Activated T-helper 1 cell treated with anti-CD3 and anti-CD28 coated beads, Interleukin-12 subunit alpha, Interleukin-12 subunit beta, Interleukin-2, Interleukin-4 antibody, amounts not matched to agents 30 ng/mL and 10 ng/mL and 1 ng/mL, durations not matched to agents 14 hours and 24 hours and 36 hours (primary cell): ENCODE measurements at regions of chr1 and their contacts with region 1.

Region 1: GRCh38 chr1:100249537-100250257 is at the start of gene DBT:
- DNase-seq: peak; percentile 92
- H3K4me3 Mint-ChIP-seq: no peak within 1 kb of the TSS
- H3K27ac Mint-ChIP-seq: no peak within 1 kb of the TSS
- H3K4me1 Mint-ChIP-seq: peaks cover 10% of the 10 kb centered on the region
- H3K27me3 Mint-ChIP-seq: peaks cover 12% of the 10 kb centered on the region
- total RNA-seq, gene DBT: 11.3 and 11.7 TPM in 2 replicates

Region 2: DNA sequence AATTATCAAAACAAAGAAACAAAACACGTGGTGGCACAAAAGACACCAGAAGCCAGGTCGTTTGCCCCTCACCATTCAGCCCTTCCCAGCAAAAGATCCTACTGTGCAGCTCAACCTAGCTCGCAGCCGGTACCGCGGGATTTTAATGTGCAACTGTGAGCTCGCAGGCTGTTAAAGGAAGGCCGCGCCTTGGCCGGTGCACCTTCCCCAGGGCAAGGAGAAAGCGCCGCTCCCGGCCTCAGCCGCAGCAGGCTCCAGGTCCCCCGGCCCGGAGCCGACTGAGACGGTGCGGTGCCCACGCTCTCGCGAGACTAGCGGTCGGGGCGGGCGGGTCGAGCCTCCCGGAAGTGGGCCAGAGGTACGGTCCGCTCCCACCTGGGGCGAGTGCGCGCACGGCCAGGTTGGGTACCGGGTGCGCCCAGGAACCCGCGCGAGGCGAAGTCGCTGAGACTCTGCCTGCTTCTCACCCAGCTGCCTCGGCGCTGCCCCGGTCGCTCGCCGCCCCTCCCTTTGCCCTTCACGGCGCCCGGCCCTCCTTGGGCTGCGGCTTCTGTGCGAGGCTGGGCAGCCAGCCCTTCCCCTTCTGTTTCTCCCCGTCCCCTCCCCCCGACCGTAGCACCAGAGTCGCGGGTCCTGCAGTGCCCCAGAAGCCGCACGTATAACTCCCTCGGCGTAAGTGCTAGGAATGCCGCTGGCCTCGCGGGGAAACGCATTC is 399.8 kb before region 1 on chr1 and contains the start of gene AGL:
- intact Hi-C with region 1: loop called (anchors 10 kb)
- DNase-seq: peak; percentile 80
- H3K4me3 Mint-ChIP-seq: peak within 1 kb of the TSS; percentile 92
- H3K27ac Mint-ChIP-seq: peak within 1 kb of the TSS; percentile 86
- H3K4me1 Mint-ChIP-seq: peaks cover 17% of the 10 kb centered on the region
- H3K27me3 Mint-ChIP-seq: peaks cover 6% of the 10 kb centered on the region
- total RNA-seq, gene AGL: 10.7 and 10.8 TPM in 2 replicates

Region 3: GRCh38 chr1:99956755-99957154 is 292.9 kb before region 1 on chr1:
- intact Hi-C with region 1: no loop called
- DNase-seq: no peak
- H3K4me3 Mint-ChIP-seq: no peak overlapping the region
- H3K27ac Mint-ChIP-seq: no peak overlapping the region
- H3K4me1 Mint-ChIP-seq: no peaks in the 10 kb centered on the region
- H3K27me3 Mint-ChIP-seq: no peaks in the 10 kb centered on the region

Region 4: DNA sequence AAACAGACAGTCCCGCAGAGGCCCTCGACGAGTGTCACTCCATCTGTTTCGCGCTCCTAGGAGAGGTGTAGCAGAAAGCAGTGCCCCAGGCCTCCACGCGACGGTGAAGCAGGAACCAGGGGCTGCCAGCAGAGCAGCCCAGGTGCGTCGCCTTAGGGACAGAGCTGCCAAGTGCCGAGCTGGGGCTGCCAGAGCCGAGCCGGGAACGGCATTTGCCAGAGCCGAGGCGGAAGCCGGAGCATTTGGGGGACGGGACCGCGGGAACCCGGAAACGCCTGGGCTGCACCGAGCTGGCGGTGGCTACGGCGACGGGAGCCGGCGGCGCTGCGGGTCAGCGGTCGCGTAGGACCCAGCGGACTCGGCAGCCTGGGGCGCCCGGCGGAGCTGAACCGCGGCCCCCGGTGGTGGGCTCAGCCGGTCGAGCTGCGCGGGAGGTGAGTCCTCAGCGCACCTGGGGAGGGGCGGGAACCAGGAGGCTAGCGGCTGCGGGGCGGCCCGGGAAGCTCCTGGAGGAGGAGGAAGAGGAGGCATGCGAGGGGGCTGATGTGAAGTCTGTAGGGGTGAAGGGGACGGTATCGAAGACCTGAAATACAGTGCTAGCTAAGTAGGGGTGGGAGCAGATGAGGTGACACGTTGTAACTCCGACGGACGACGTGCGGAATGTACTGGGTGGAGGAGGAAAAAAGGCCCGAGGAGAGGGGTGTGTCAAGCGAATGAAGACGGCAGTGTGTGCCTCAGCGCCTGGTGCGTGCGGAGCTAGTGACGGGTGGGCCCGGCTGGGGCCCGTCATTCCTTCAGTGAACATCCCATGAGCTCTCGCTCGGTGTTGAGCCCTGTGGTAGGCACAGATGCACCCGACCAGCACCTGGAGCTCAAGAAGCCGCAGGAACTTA is 279.7 kb before region 1 on chr1 and contains the start of gene SLC35A3:
- intact Hi-C with region 1: loop called (anchors 5 kb)
- DNase-seq: peak; percentile 73
- H3K4me3 Mint-ChIP-seq: peak within 1 kb of the TSS; percentile 99
- H3K27ac Mint-ChIP-seq: peak within 1 kb of the TSS; percentile 95
- H3K4me1 Mint-ChIP-seq: peaks cover 22% of the 10 kb centered on the region
- H3K27me3 Mint-ChIP-seq: no peaks in the 10 kb centered on the region
- total RNA-seq, gene SLC35A3: 16.0 and 16.3 TPM in 2 replicates

Region 5: GRCh38 chr1:100265931-100266740 is 16.4 kb after region 1 on chr1 and contains the start of gene RTCA:
- intact Hi-C with region 1: loop called (anchors 1 kb)
- DNase-seq: peak; percentile 94
- H3K4me3 Mint-ChIP-seq: peak within 1 kb of the TSS; percentile 100
- H3K27ac Mint-ChIP-seq: peak within 1 kb of the TSS; percentile 100
- H3K4me1 Mint-ChIP-seq: peaks cover 50% of the 10 kb centered on the region
- H3K27me3 Mint-ChIP-seq: peaks cover 4% of the 10 kb centered on the region
- total RNA-seq, gene RTCA: 48.1 and 52.0 TPM in 2 replicates